AG04450 (cell line): ENCODE measurements at regions of chr4 and their contacts with region 1.

Region 1: GRCh38 chr4:78644744-78645330 is 93.3 kb downstream of the ANXA3 start:
- DNase-seq: peak; percentile 56
- H3K4me3 ChIP-seq: no peak overlapping the region
- H3K27ac ChIP-seq: peak overlapping the region; percentile 97
- H3K27me3 ChIP-seq: no peaks in the 10 kb centered on the region
- CTCF ChIP-seq: peak; percentile 96

Region 2: DNA sequence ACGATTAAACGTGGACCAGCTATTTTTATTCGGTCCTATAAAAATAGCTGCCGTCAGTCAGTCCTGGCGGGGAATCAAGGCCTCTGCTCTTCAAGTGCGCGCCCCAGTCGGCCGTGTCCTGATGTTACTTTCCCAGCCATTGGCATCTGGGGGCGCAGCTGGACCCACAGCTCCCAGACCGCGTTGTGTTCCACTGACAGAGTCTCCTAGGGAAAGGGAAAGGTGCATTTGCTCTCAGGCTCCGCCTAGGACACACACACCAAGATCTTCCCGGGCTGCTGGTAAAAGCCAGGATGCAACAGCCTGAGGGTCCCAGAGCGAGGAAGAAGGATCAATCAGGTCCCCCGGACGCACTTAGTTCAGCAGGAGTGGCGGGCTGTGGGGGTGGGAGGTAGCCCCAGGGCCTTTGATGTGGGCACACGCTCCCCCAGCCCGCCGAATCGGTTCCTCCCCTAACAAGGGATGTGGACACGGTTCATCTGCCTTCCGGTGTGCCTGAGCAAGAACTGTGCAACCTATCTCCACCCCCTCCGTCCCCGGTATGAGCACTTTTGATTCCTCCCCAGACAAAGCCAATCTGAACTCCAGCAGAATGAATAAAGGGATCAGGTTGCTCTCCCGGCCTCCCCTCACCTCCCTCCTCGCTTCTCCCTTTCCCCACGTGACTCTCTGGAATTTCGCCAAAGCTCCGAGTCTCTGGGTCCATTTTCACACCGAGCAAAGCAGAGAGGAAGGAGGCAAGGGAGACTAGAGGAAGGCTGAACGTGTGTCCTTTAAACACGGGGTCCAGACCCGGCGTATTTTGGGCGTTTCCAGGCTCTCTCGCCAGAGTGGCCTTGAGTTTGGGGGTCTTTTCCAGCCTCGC is 588.3 kb before region 1 on chr4:
- CTCF ChIA-PET with region 1: no interaction called
- POLR2A ChIA-PET with region 1: no interaction called
- DNase-seq: no peak
- H3K4me3 ChIP-seq: peak overlapping the region; percentile 59
- H3K27ac ChIP-seq: no peak overlapping the region
- H3K27me3 ChIP-seq: peaks cover 48% of the 10 kb centered on the region
- CTCF ChIP-seq: no peak

Region 3: DNA sequence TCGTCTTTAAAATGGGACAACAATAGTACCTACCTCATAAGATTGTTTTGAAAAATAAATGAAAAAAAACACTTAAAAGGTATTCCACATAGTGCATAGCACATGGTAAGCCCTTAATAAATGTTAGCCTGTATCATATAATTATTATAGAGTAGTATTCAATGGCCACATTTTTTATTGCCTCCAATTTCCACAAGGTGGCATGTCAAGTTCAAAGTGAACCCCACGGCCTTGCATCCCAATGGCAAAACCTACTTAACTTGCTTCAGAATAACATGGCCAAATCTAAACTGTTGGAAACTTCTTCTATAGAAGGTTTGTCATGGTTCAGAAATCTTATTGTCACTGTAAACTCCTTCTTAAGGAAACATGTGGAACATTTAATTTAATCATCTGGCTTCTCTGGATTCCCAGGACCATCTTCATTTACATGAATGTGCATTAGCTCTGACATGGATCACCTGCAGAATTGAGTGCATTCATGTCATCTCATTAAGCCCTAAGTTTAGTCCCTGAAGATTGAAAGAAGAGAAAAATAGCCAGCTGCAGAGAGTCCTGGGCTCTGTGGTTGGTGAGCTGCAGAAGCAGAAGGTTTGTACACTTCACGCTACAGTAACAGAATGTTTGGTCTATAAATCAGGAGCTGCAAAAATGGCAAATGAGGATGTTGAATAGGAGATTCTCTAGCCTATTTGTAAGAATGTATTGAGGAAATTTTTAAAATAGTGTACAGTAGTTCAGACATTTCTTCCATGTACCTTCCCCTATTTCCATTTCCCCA is 32.2 kb before region 1 on chr4:
- CTCF ChIA-PET with region 1: interaction called, 24 read pairs
- POLR2A ChIA-PET with region 1: no interaction called
- DNase-seq: peak; percentile 26
- H3K4me3 ChIP-seq: no peak overlapping the region
- H3K27ac ChIP-seq: no peak overlapping the region
- H3K27me3 ChIP-seq: no peaks in the 10 kb centered on the region
- CTCF ChIP-seq: peak; percentile 68

Region 4: GRCh38 chr4:78634011-78634664 is 10.7 kb before region 1 on chr4:
- CTCF ChIA-PET with region 1: interaction called, 46 read pairs
- POLR2A ChIA-PET with region 1: interaction called, 3 read pairs
- DNase-seq: no peak
- H3K4me3 ChIP-seq: no peak overlapping the region
- H3K27ac ChIP-seq: no peak overlapping the region
- H3K27me3 ChIP-seq: no peaks in the 10 kb centered on the region
- CTCF ChIP-seq: no peak

Region 5: GRCh38 chr4:78710536-78710935 is 65.7 kb after region 1 on chr4:
- CTCF ChIA-PET with region 1: no interaction called
- POLR2A ChIA-PET with region 1: no interaction called
- DNase-seq: no peak
- H3K4me3 ChIP-seq: no peak overlapping the region
- H3K27ac ChIP-seq: no peak overlapping the region
- H3K27me3 ChIP-seq: no peaks in the 10 kb centered on the region
- CTCF ChIP-seq: no peak

Region 6: GRCh38 chr4:78864405-78865024 is 219.7 kb after region 1 on chr4:
- CTCF ChIA-PET with region 1: interaction called, 12 read pairs
- POLR2A ChIA-PET with region 1: no interaction called
- DNase-seq: peak; percentile 63
- H3K4me3 ChIP-seq: no peak overlapping the region
- H3K27ac ChIP-seq: no peak overlapping the region
- H3K27me3 ChIP-seq: no peaks in the 10 kb centered on the region
- CTCF ChIP-seq: peak; percentile 68